ENCODE measurements at regions of chr2 and their contacts with region 1.

Region 1: DNA sequence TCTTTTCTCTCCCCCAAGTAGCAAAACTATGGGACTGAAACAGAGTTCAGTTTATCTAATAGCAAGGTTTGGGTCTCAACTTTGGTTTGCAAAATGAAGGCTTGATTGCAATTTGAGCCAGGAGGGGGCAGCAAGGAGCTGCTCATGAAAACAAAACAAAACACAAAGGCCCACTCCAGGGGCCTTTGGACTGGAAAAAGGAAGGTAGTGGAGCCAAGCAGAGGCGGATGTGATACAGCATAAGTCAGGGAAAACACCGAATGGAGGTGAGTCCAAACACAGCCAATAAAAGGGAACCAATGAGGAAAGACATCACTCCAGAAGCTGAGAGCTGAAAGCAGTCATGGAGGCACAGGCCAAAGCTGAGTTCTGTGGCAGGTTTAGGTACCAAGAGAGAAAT is 799.7 kb upstream of the ACVR2A start:
- DNase-seq: peak; percentile 41 to 87
- H3K4me3 ChIP-seq: no peak overlapping the region
- H3K27ac ChIP-seq: no peak overlapping the region
- H3K4me1 ChIP-seq: peaks cover 0 to 4% (median 1%) of the 10 kb centered on the region in 4 experiments; a peak in 2 of 7 replicates
- H3K27me3 ChIP-seq: no peaks in the 10 kb centered on the region
- CTCF ChIP-seq: peak in 2 of 3 experiments; percentile 63 to 68; a peak in 3 of 4 replicates
- EP300 ChIP-seq: no peak
- POLR2A ChIP-seq: no peak
- RAD21 ChIP-seq: peak; percentile 78 to 87

Region 2: DNA sequence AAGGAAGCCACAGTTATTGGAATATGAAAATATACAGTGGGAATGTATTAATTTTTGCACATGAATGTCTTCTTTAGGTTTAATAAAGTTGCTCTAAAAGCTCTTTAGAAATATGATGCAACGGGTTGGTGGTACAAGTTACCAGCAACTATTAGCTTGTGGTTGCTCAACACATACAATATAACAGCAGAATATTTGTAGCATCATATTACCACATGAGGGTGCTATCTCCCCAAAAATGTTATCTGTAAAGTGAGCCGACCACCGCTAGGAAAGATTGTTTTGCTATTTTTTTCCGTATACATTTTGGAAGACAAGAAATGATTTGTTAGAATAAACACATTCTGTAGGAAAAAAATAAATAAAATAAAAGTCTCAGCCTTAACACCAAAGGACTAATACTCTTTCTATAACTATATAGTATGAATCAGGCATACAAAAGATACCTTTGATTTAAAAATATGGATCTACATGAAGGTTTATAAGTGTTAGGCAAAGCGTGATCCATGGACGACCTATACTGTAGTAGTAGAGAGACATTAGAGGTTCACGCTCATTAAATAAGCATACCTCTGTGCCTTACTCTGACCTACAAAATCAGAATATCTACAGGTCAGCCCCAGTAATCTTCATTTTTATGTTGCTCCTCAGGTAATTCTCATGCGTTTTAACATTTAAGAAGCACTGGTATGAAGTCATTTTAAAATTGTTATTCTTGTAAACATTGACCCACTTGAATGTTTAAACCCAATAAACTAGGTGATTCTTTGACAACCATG is 310.9 kb before region 1 on chr2:
- CTCF ChIA-PET with region 1: interaction called, 13 read pairs
- POLR2A ChIA-PET with region 1: no interaction called
- DNase-seq: no peak
- H3K4me3 ChIP-seq: 0 out of 8 replicates have a peak overlapping the region, but pooled peaks of 1 of the 4 experiments have one; percentile 12
- H3K27ac ChIP-seq: no peak overlapping the region
- H3K4me1 ChIP-seq: peaks cover 0 to 4% (median 0%) of the 10 kb centered on the region in 4 experiments; a peak in 1 of 7 replicates
- H3K27me3 ChIP-seq: no peaks in the 10 kb centered on the region
- CTCF ChIP-seq: peak in 2 of 3 experiments; percentile 58 to 65; a peak in 2 of 4 replicates
- EP300 ChIP-seq: no peak
- POLR2A ChIP-seq: no peak
- RAD21 ChIP-seq: peak; percentile 89 to 90

Region 3: GRCh38 chr2:146927080-146927711 is 117.9 kb before region 1 on chr2:
- CTCF ChIA-PET with region 1: interaction called, 13 read pairs
- POLR2A ChIA-PET with region 1: no interaction called
- DNase-seq: peak; percentile 44 to 58
- H3K4me3 ChIP-seq: no peak overlapping the region
- H3K27ac ChIP-seq: no peak overlapping the region
- H3K4me1 ChIP-seq: no peaks in the 10 kb centered on the region; a peak in 2 of 7 replicates
- H3K27me3 ChIP-seq: no peaks in the 10 kb centered on the region
- CTCF ChIP-seq: peak; percentile 70 to 88 (median 85)
- EP300 ChIP-seq: no peak
- POLR2A ChIP-seq: no peak
- RAD21 ChIP-seq: peak; percentile 97

Region 4: DNA sequence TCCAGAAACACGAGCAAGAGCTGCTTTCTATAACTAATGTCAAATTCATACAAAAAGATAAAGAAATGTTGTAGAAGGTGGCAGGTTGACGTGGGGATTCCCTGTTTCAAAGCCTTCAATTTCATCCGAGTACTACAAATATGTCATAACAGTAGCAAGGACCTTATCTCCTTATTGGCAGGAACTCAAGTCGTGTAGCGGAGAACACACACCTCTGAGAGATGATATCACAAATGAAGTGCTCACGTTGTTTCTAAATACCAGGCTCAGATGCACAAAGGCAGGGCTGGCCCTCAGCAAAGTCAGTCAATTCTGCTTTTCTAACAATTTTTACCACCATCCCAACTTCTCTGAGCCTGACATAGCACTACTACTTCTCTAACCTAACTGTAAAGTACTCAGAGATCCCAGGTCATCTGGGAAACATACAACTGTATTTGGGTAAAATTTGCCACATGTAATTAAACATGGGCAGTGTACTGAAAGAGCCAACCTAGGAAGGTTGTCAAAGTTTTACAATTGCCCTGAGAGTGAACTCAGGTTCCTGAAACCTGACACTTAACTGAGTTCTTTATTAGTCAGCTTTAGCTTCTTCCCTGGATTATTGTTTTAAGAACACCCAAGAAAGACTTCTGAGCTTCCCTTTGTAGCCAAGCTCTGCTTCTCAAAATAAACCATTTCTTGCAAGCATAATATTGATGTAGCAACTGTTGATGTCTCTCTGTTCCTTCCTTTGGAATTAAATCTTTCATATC is 14.0 kb before region 1 on chr2:
- CTCF ChIA-PET with region 1: interaction called, 25 read pairs
- POLR2A ChIA-PET with region 1: no interaction called
- DNase-seq: no peak
- H3K4me3 ChIP-seq: no peak overlapping the region
- H3K27ac ChIP-seq: no peak overlapping the region
- H3K4me1 ChIP-seq: peaks cover 0 to 7% (median 2%) of the 10 kb centered on the region in 4 experiments; a peak in 4 of 7 replicates
- H3K27me3 ChIP-seq: no peaks in the 10 kb centered on the region
- CTCF ChIP-seq: no peak
- EP300 ChIP-seq: no peak
- POLR2A ChIP-seq: no peak
- RAD21 ChIP-seq: no peak

Region 5: DNA sequence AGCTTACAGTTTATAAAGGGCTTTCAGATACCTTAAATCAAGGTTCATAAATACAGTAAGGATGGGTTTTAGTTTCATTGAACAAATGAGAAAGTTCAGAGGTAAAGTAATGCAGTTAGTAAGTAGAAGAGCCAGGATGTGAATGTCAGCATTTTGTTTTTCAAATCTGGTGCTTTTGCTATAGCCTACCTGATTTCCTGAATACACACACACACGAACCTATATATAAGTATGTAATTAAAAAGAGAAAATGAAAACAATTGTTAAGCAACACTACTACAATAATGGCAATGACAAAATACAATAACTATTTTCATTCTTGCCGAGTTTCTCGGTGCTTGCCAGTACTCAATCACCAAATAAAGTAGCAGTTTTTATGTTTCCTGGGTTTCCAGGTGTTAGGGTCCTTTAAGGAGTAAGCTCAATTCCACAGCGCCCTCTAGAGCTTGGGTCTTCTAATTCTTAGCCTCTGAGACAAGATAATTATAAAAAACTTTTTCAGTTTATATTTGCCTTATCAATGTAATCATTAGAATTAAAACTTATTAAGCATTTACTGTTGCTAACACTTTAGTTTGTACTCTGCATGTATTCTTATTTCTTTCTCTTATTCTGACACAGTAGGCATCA is 286.8 kb after region 1 on chr2:
- CTCF ChIA-PET with region 1: interaction called, 20 read pairs
- POLR2A ChIA-PET with region 1: no interaction called
- DNase-seq: peak in 1 of 2 experiments; percentile 55
- H3K4me3 ChIP-seq: no peak overlapping the region
- H3K27ac ChIP-seq: no peak overlapping the region
- H3K4me1 ChIP-seq: no peaks in the 10 kb centered on the region
- H3K27me3 ChIP-seq: no peaks in the 10 kb centered on the region
- CTCF ChIP-seq: peak in 2 of 3 experiments; percentile 48 to 53; a peak in 3 of 4 replicates
- EP300 ChIP-seq: no peak
- POLR2A ChIP-seq: no peak
- RAD21 ChIP-seq: peak; percentile 79 to 83

Region 6: GRCh38 chr2:147910990-147911473 is 865.9 kb after region 1 on chr2:
- CTCF ChIA-PET with region 1: interaction called, 11 read pairs
- POLR2A ChIA-PET with region 1: no interaction called
- DNase-seq: no peak
- H3K4me3 ChIP-seq: no peak overlapping the region
- H3K27ac ChIP-seq: no peak overlapping the region
- H3K4me1 ChIP-seq: no peaks in the 10 kb centered on the region
- H3K27me3 ChIP-seq: no peaks in the 10 kb centered on the region
- CTCF ChIP-seq: peak in 2 of 3 experiments; percentile 38 to 44; a peak in 2 of 4 replicates
- EP300 ChIP-seq: no peak
- POLR2A ChIP-seq: no peak
- RAD21 ChIP-seq: peak; percentile 85 to 88